ENCODE measurements at regions of chr5 and their contacts with region 1.

Region 1: GRCh38 chr5:74631081-74631953 is 9.2 kb downstream of the ENC1 start:
- DNase-seq: no peak
- H3K4me3 ChIP-seq: peak overlapping the region; percentile 30; the same call in 1 of the 2 replicates
- H3K27ac ChIP-seq: peak overlapping the region; percentile 90
- H3K4me1 ChIP-seq: peaks cover 98% of the 10 kb centered on the region
- H3K27me3 ChIP-seq: no peaks in the 10 kb centered on the region
- CTCF ChIP-seq: no peak

Region 2: GRCh38 chr5:74595143-74595925 is 36.0 kb before region 1 on chr5:
- CTCF ChIA-PET with region 1: no interaction called
- POLR2A ChIA-PET with region 1: interaction called, 4 read pairs
- intact Hi-C with region 1: loop called (anchors 5 kb)
- DNase-seq: peak; percentile 31 to 81
- H3K4me3 ChIP-seq: no peak overlapping the region
- H3K27ac ChIP-seq: peak overlapping the region; percentile 29; the same call in 1 of the 2 replicates
- H3K4me1 ChIP-seq: peaks cover 20% of the 10 kb centered on the region
- H3K27me3 ChIP-seq: no peaks in the 10 kb centered on the region
- CTCF ChIP-seq: no peak

Region 3: DNA sequence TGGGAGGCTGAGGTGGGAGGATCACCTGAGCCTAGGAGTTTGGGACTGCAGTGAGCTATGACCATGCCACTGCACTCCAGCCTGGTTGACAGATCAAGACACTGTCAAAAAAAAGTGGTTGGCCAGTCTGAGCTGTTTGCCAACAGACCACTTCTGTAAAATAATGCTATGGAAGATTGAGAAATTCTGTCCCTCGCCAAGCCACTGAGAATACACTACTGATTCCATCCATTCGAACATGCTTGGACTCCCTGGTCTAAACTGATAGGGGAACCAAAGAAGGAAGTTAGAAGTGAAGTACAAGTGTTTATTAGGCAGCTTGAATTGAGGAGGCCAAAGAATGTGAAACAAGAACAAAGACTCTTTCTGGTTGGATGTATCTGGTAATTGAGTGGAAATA is 18.0 kb before region 1 on chr5:
- CTCF ChIA-PET with region 1: no interaction called
- POLR2A ChIA-PET with region 1: no interaction called
- intact Hi-C with region 1: no loop called
- DNase-seq: no peak
- H3K4me3 ChIP-seq: no peak overlapping the region
- H3K27ac ChIP-seq: no peak overlapping the region
- H3K4me1 ChIP-seq: no peaks in the 10 kb centered on the region
- H3K27me3 ChIP-seq: no peaks in the 10 kb centered on the region
- CTCF ChIP-seq: no peak

Region 4: GRCh38 chr5:74693191-74693590 is 61.9 kb after region 1 on chr5:
- CTCF ChIA-PET with region 1: no interaction called
- POLR2A ChIA-PET with region 1: no interaction called
- intact Hi-C with region 1: no loop called
- DNase-seq: no peak
- H3K4me3 ChIP-seq: no peak overlapping the region
- H3K27ac ChIP-seq: no peak overlapping the region
- H3K4me1 ChIP-seq: no peaks in the 10 kb centered on the region
- H3K27me3 ChIP-seq: no peaks in the 10 kb centered on the region
- CTCF ChIP-seq: no peak